ENCODE measurements at regions of chr7 and their contacts with region 1.

Region 1: DNA sequence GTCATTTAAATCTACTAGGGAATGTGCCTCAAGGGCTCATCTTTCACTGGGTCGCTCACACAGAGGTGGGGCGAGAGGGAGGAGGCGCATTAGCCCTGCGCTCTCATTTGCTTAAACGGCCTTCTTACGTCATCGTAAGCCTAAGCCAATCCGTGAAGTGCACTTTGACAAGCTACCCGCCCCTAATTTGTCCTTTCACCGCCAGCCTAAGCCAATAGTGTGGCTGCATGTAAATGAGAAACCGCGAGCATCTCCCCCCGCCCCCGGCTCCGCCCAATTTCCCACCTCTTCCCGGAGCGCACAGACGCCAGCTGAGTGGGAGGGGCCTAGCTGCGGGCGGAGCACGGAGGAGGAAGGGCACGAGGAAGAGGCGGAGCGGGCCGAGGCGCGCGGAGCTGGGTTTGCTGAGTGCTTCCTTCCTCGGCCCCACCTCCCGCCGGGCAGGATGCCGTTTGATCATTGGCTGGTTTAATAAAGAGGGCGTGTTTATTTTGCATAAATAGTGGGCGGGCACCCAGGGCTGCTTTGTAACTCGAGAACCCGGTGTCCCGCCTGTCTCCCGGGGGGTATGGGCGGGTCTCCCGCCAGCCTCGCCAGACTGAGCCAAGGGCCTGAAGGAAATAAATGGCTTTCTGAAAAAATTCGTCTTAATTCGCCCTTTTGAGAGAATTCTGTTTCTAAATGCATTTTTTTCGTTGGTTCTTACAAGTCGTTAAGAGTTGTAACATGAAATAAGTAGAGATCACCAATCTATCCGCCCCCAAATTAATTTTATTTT is 289.5 kb upstream of the NFE2L3 start:
- DNase-seq: no peak

Region 2: DNA sequence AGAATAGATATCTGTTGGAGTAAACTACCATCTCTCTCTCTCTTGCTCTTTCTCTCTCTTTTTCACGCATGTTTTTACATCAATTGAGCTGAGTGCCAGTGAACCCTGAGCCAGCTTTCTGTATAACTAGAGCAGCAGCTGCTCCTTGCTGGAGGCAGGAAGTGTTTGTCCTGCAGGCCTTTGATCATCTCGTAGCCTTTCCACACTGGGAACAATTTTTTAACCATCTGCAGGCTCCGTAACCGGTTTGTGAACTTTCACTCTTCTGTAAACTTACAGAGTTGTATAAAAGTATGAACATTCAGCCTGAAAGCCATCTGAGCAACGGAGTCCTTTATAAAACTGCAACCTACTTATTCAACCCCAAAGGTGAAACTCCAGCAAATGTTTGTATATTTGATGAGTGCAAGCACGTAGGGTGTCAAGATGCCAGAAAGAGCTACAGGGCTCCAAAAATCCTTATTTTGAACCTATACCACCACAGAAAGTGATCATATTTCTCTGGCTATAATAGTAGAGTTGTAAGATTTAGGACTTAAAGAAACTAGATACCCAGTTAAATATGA is 126.8 kb after region 1 on chr7:
- intact Hi-C with region 1: no loop called
- DNase-seq: no peak

Region 3: GRCh38 chr7:26022982-26023381 is 160.5 kb after region 1 on chr7:
- intact Hi-C with region 1: no loop called
- DNase-seq: no peak

Region 4: GRCh38 chr7:26853788-26854393 is 991.4 kb after region 1 on chr7:
- intact Hi-C with region 1: loop called (anchors 10 kb)
- DNase-seq: no peak

Region 5: DNA sequence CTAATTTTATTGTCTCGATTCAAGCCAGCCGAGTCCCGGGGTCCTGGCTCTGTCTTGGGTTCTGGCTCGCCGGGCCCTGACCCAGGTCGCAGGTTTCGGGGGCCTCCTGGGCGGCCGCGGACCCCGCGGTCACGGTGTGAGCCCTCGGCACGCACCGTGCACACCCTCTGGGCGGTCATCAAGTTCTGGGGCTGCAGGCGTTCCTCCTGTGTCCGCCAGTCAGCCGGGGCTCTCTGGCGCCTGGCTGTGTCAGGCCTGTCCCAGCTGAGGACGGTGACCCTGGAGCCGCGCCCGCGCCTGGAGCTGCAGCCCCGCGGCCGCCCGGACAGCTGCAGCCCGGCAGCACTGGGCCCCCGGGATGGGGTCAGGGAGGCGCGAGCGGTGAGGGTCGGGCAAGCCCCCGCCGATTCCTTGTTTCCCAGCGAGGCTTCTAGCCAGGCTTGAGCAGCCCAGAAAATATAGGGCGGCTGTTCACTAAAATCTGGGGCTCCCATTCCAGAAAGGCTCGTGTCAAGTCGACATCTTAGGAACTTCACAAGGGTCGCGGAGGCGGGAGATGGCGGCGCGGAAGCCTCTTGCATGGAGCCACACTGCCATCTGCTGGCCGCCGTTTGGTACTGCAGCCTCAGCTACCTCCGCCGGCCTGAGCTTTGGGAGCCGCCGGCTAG is 1298.2 kb after region 1 on chr7:
- intact Hi-C with region 1: loop called (anchors 10 kb)
- DNase-seq: peak; percentile 92

Measured in cardiac septum (tissue), 1 donor.